IMR-90 (cell line): ENCODE measurements at regions of chr11 and their contacts with region 1.

Region 1: DNA sequence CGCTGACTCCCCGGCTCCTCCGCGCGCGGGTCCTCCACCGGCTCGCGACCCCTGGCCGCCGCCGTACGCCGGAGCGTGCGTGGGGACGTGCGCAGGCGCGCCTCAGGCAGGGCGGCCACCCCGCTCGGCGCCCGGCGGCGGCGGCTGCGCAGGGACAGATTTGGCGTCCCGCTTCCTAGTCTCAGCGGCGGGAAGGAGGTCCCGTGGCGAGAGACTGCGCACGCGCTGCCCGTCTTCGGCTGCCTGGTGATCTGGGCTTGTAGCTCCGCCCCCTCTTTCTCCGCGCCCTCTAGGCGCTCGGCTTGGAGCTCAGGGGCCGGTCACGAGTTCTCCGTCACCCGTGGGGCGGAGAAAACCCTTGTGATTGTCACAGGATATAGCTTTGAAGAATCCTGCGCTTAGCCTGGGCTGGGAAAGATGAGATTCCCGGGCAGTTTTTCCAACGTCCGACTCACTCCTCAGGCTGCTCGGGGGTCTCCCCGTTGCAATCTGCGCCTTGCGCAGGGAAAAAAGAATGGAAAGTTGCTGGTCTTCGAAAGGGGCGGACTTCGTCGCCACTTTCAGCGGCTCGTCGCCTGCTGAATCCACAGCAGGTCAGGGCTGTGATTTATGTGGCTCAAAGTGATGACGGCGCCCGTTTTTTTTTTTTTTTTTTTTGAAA is at the start of gene PATL1:
- DNase-seq: peak; percentile 98
- ATAC-seq: peak; percentile 95
- H3K4me3 ChIP-seq: peak within 1 kb of the TSS; percentile 97
- H3K27ac ChIP-seq: peak within 1 kb of the TSS; percentile 93
- H3K4me1 ChIP-seq: peaks cover 3% of the 10 kb centered on the region; the same call in 1 of the 2 replicates
- H3K27me3 ChIP-seq: no peaks in the 10 kb centered on the region
- CTCF ChIP-seq: 0 out of 2 replicates have a peak, but pooled peaks have one; percentile 9
- POLR2A ChIP-seq: peak; percentile 67
- RAD21 ChIP-seq: no peak
- total RNA-seq, gene PATL1: 3.9 and 4.4 TPM in 2 replicates

Region 2: DNA sequence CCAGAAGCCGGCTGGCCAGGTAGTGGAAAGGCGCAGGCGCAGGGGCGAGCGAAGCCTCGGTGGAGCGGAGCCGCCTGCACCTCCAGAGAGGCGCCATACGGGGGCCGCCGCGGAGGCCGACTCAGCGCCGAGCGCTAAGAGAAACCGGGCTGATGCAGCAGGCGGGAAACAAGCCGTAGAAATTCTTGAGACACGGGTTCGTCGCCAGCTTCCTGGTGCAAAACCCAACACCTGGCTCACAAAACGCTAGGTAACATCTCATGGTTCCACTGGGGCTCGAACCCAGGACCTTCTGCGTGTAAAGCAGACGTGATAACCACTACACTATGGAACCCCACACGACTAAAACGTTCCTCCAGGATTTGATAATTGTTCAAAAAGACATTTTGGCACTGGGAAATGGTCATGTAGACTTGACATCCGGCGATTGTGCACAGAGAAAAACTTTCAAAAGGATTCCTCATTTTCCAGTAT is 118.7 kb before region 1 on chr11:
- CTCF ChIA-PET with region 1: no interaction called
- POLR2A ChIA-PET with region 1: no interaction called
- dilution Hi-C with region 1: no loop called
- in situ Hi-C with region 1: no loop called
- intact Hi-C with region 1: loop called (anchors 2 kb)
- DNase-seq: peak; percentile 97
- ATAC-seq: peak; percentile 90
- H3K4me3 ChIP-seq: peak overlapping the region; percentile 54
- H3K27ac ChIP-seq: peak overlapping the region; percentile 48; the same call in 1 of the 2 replicates
- H3K4me1 ChIP-seq: 0 out of 2 replicates have a peak, but pooled peaks cover 2% of the 10 kb centered on the region
- H3K27me3 ChIP-seq: no peaks in the 10 kb centered on the region
- CTCF ChIP-seq: peak; percentile 49
- POLR2A ChIP-seq: no peak
- RAD21 ChIP-seq: peak; percentile 33

Region 3: GRCh38 chr11:59560702-59561469 is 108.2 kb before region 1 on chr11:
- CTCF ChIA-PET with region 1: no interaction called
- POLR2A ChIA-PET with region 1: interaction called, 21 read pairs
- dilution Hi-C with region 1: no loop called
- in situ Hi-C with region 1: no loop called
- intact Hi-C with region 1: no loop called
- DNase-seq: peak; percentile 82
- ATAC-seq: peak; percentile 42
- H3K4me3 ChIP-seq: peak overlapping the region; percentile 96
- H3K27ac ChIP-seq: peak overlapping the region; percentile 91
- H3K4me1 ChIP-seq: peaks cover 2% of the 10 kb centered on the region; the same call in 1 of the 2 replicates
- H3K27me3 ChIP-seq: no peaks in the 10 kb centered on the region
- CTCF ChIP-seq: no peak
- POLR2A ChIP-seq: no peak
- RAD21 ChIP-seq: no peak

Region 4: DNA sequence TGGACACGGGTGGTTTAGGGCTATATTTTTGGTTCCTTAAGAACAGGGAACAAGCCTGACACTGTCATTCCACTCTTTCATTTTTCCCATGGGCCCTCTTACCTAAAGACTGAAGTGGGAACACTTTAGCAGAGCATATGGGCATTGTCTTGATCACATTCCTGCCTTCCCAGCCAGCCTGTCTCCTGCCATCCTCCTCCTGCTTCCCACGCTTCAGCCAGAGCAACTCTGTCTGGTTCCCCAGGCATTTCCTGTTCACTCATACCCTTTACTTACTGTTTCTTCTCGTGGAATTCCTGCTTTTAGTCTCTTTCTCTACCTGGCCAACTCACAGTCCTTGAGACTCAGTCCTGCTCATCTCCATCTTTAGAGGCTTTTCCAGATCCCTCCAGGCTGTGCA is 118.7 kb after region 1 on chr11:
- CTCF ChIA-PET with region 1: no interaction called
- POLR2A ChIA-PET with region 1: no interaction called
- dilution Hi-C with region 1: no loop called
- in situ Hi-C with region 1: loop called (anchors 10 kb)
- intact Hi-C with region 1: no loop called
- DNase-seq: peak; percentile 73
- ATAC-seq: peak; percentile 63
- H3K4me3 ChIP-seq: no peak overlapping the region
- H3K27ac ChIP-seq: no peak overlapping the region
- H3K4me1 ChIP-seq: peaks cover 6% of the 10 kb centered on the region
- H3K27me3 ChIP-seq: no peaks in the 10 kb centered on the region
- CTCF ChIP-seq: no peak
- POLR2A ChIP-seq: no peak
- RAD21 ChIP-seq: no peak

Region 5: GRCh38 chr11:59802639-59803176 is 133.6 kb after region 1 on chr11:
- CTCF ChIA-PET with region 1: no interaction called
- POLR2A ChIA-PET with region 1: no interaction called
- dilution Hi-C with region 1: no loop called
- in situ Hi-C with region 1: loop called (anchors 10 kb)
- intact Hi-C with region 1: loop called (anchors 5 kb)
- DNase-seq: peak; percentile 58
- ATAC-seq: peak; percentile 79
- H3K4me3 ChIP-seq: no peak overlapping the region
- H3K27ac ChIP-seq: no peak overlapping the region
- H3K4me1 ChIP-seq: no peaks in the 10 kb centered on the region
- H3K27me3 ChIP-seq: no peaks in the 10 kb centered on the region
- CTCF ChIP-seq: peak; percentile 77
- POLR2A ChIP-seq: no peak
- RAD21 ChIP-seq: peak; percentile 84

Region 6: DNA sequence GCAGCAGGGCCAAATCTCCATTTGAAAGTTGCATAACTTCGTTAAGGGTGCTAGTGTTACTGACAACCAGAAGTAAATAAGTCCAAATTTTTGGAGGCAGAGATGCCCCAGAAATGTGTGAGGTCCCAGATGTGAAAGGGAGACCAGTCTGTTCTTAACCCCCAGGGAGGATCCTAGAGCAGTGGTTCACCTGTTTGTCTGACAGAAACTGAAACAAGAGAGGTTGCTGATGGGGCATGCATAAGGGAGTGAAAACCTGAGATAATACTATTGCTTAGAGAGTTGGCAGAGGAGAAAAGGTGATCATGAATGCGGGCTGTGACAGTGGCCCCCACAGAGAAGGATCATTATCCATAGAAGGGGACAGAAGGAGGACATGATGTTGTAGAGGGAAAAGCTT is 172.4 kb after region 1 on chr11:
- CTCF ChIA-PET with region 1: no interaction called
- POLR2A ChIA-PET with region 1: no interaction called
- dilution Hi-C with region 1: no loop called
- in situ Hi-C with region 1: no loop called
- intact Hi-C with region 1: no loop called
- DNase-seq: no peak
- ATAC-seq: no peak
- H3K4me3 ChIP-seq: no peak overlapping the region
- H3K27ac ChIP-seq: no peak overlapping the region
- H3K4me1 ChIP-seq: no peaks in the 10 kb centered on the region
- H3K27me3 ChIP-seq: no peaks in the 10 kb centered on the region; the same call in 1 of the 2 replicates
- CTCF ChIP-seq: no peak
- POLR2A ChIP-seq: no peak
- RAD21 ChIP-seq: no peak